Naive thymus-derived CD4-positive, alpha-beta T cell (primary cell): ENCODE measurements at regions of chr14 and their contacts with region 1.

Region 1: GRCh38 chr14:91060351-91061055 is at the start of gene RPS6KA5:
- DNase-seq: peak; percentile 93 to 100 (median 100)
- ATAC-seq: peak; percentile 89
- H3K4me3 ChIP-seq: peak within 1 kb of the TSS; percentile 59
- H3K4me3 Mint-ChIP-seq: peak within 1 kb of the TSS in 9 of 10 donors; percentile 80 to 90 (median 86)
- H3K27ac ChIP-seq: peak within 1 kb of the TSS; percentile 91
- H3K27ac Mint-ChIP-seq: peak within 1 kb of the TSS; percentile 28 to 83 (median 74)
- H3K4me1 ChIP-seq: peaks cover 36 to 38% of the 10 kb centered on the region in 2 donors
- H3K4me1 Mint-ChIP-seq: peaks cover 39 to 71% (median 64%) of the 10 kb centered on the region in 7 donors
- H3K27me3 ChIP-seq: no peaks in the 10 kb centered on the region
- H3K27me3 Mint-ChIP-seq: no peaks in the 10 kb centered on the region
- total RNA-seq, gene RPS6KA5: 31.9 to 43.5 (median 34.3) TPM

Region 2: DNA sequence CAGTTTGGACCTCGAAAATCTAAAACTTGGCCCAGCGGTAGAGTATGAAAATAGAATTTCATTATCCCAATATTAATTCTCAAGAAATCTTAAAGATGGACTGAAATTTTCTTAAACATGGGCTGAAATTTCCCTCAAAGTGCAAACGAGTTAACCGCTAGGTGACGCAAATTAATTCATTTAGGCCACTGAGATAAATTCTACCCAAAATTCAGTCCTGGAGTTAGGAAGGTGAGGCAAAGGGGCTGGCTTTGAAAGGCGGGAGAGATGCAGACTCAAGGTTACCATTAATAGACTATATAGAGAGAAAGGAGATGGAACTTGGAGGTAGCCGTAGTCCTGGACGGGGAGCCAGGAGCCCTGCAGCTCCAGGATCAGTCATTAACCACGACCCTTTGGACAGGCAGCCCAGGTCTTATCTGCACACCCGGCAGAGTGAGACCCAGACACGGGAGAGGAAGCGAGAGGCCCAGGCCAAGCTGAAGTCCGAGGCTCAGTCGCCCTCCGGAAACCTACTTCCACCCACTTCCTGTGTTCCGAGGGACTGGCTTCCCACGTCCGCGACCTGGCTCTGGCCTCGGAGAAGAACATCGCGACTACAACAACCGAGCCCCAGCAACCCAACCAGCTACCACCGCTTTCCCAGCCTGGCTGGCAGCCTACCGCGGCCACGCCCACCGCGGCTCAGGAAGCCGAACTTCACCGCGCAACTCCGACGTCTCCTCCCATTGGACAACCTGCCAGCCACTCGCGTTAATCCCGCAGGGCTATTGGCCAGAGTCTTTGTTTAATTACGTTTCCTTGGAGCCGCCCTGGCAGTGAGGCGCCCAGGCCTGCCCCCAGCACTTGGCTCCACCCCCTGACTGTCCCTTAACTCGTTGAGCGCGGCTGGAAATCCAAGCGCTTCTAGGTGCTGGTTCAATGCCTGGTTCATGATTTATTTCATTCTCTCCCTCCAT is 1106.2 kb before region 1 on chr14 and contains the start of gene EFCAB11:
- CTCF ChIA-PET with region 1: no interaction called
- POLR2A ChIA-PET with region 1: no interaction called
- intact Hi-C with region 1: loop called in 1 of 2 experiments (anchors 10 kb)
- DNase-seq: peak; percentile 80 to 98 (median 97)
- ATAC-seq: peak; percentile 90
- H3K4me3 ChIP-seq: peak within 1 kb of the TSS; percentile 72
- H3K4me3 Mint-ChIP-seq: peak within 1 kb of the TSS; percentile 74 to 98 (median 94)
- H3K27ac ChIP-seq: peak within 1 kb of the TSS; percentile 94
- H3K27ac Mint-ChIP-seq: peak within 1 kb of the TSS; percentile 82 to 98 (median 91)
- H3K4me1 ChIP-seq: peaks cover 16 to 21% of the 10 kb centered on the region in 2 donors
- H3K4me1 Mint-ChIP-seq: peaks cover 21 to 54% (median 43%) of the 10 kb centered on the region in 7 donors
- H3K27me3 ChIP-seq: no peaks in the 10 kb centered on the region
- H3K27me3 Mint-ChIP-seq: no peaks in the 10 kb centered on the region
- total RNA-seq, gene EFCAB11: 1.2 to 8.5 (median 1.9) TPM

Region 3: DNA sequence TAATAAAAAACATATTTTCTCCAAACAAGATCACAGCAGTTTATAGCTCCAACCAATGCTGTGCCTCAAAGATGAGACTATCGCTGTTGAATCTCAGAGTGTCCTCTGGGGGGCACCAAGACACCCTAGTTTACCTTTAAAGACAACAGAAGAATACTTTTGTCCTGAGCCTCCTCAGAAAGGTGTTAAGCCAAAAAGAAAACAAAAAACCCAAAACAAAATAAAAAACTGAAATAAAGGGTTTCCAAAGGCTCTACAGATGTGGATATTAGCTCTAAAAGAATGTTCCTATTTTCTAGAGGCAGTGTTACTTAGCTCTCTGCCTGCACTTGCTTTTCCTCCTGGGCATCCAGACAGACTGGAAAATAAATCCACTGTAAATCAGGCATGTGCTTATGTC is 157.4 kb before region 1 on chr14:
- CTCF ChIA-PET with region 1: no interaction called
- POLR2A ChIA-PET with region 1: interaction called, 3 read pairs
- intact Hi-C with region 1: loop called (anchors 1 to 2 kb)
- DNase-seq: peak; percentile 11 to 71 (median 57)
- ATAC-seq: peak; percentile 89
- H3K4me3 ChIP-seq: no peak overlapping the region
- H3K4me3 Mint-ChIP-seq: no peak overlapping the region
- H3K27ac ChIP-seq: no peak overlapping the region
- H3K27ac Mint-ChIP-seq: peak overlapping the region in 2 of 9 donors; percentile 36 to 48
- H3K4me1 ChIP-seq: no peaks in the 10 kb centered on the region
- H3K4me1 Mint-ChIP-seq: peaks cover 0 to 30% (median 0%) of the 10 kb centered on the region in 7 donors
- H3K27me3 ChIP-seq: no peaks in the 10 kb centered on the region
- H3K27me3 Mint-ChIP-seq: no peaks in the 10 kb centered on the region

Region 4: GRCh38 chr14:91078095-91078737 is 17.7 kb after region 1 on chr14:
- CTCF ChIA-PET with region 1: interaction called, 4 read pairs
- POLR2A ChIA-PET with region 1: interaction called, 25 read pairs
- intact Hi-C with region 1: loop called (anchors 1 kb)
- DNase-seq: peak in 8 of 9 donors; percentile 52 to 88 (median 82)
- ATAC-seq: peak; percentile 98
- H3K4me3 ChIP-seq: no peak overlapping the region
- H3K4me3 Mint-ChIP-seq: peak overlapping the region; percentile 56 to 85 (median 72)
- H3K27ac ChIP-seq: no peak overlapping the region
- H3K27ac Mint-ChIP-seq: peak overlapping the region; percentile 32 to 92 (median 82)
- H3K4me1 ChIP-seq: peaks cover 10 to 17% of the 10 kb centered on the region in 2 donors
- H3K4me1 Mint-ChIP-seq: peaks cover 24 to 63% (median 37%) of the 10 kb centered on the region in 7 donors
- H3K27me3 ChIP-seq: no peaks in the 10 kb centered on the region
- H3K27me3 Mint-ChIP-seq: peaks cover 0 to 2% (median 0%) of the 10 kb centered on the region in 5 donors

Region 5: DNA sequence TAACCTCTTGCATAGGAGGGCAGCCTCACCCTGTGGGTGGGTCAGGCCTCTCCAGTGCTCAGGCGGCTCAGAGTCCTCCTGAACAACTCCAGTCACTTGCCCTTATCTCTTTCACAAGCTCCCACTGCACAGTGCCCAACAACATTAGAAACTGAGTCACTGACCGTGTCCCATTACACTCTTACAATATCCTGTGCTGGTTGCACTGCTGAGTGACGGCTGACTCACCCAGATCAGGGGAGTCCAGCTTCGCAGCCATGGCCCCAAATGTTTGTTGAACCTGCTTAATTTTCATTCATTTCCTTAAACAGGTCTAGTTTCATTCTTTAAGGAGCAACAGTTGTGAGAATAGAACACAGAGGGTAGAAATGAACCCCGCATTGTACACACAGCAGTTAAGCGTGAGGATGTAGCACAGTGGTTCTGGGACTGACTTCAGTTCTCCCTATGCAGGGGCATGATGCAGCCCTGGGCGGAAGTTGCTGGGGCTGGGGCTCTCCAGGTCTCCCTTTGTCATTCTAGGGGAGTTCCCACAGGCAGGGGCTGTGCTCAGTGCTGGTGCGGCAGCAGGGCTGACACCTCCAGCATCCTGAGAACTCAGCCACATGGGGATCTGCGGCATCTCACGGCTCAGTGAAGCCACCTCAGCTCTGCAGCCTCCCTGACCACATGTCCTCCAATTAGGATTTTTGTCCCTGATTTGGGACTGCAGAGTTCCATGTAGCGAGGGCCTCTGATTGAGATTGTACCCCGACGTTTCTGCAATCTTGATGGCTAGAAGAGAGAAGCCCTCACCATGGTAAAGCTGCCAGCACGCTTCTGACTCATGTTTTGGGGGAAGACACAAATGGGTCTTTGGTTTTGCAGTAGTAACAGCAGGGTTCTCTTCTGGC is 167.9 kb after region 1 on chr14:
- CTCF ChIA-PET with region 1: no interaction called
- POLR2A ChIA-PET with region 1: no interaction called
- intact Hi-C with region 1: loop called in 1 of 2 experiments (anchors 2 kb)
- DNase-seq: peak; percentile 42 to 86 (median 60)
- ATAC-seq: peak; percentile 89
- H3K4me3 ChIP-seq: peak overlapping the region; percentile 34
- H3K4me3 Mint-ChIP-seq: peak overlapping the region; percentile 48 to 87 (median 73)
- H3K27ac ChIP-seq: peak overlapping the region; percentile 57
- H3K27ac Mint-ChIP-seq: peak overlapping the region; percentile 9 to 98 (median 88)
- H3K4me1 ChIP-seq: peaks cover 89 to 92% of the 10 kb centered on the region in 2 donors
- H3K4me1 Mint-ChIP-seq: peaks cover 69 to 99% (median 93%) of the 10 kb centered on the region in 7 donors
- H3K27me3 ChIP-seq: no peaks in the 10 kb centered on the region
- H3K27me3 Mint-ChIP-seq: no peaks in the 10 kb centered on the region

Region 6: DNA sequence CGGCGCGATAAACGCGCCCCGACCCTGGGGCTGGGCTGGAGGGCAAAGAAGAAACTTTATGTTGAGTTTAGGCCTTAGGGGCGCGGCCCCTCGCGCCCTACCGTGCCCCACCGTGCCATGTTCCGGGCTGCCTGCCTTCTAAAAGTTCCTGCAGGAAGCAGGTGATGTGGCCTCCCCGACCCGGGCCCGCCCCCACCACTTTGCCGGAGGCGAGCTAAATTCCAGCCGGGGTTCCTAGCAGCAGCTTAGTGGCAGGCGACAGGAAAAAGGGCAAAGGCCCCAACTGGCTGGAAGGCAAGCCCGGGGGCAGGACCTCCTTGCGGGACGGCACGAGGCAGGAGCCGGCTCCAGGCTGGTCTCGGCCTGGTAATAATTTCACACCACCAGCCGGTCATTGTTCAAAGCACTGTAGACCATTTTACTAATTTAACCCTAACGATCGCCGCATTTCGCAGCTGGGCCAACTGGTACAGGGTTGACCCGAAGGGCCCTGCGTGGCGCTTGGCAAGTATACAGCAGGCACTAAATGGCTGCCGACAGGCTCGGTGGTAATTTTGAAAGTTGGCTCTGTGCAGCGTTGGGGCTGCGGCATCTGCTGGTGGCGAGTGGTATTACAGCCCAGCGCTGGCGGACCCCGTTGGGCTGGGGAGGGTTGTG is 358.0 kb after region 1 on chr14:
- CTCF ChIA-PET with region 1: interaction called, 4 read pairs
- POLR2A ChIA-PET with region 1: no interaction called
- intact Hi-C with region 1: loop called (anchors 1 to 2 kb)
- DNase-seq: peak; percentile 75 to 86 (median 82)
- ATAC-seq: peak; percentile 63
- H3K4me3 ChIP-seq: peak overlapping the region; percentile 52
- H3K4me3 Mint-ChIP-seq: peak overlapping the region; percentile 61 to 91 (median 84)
- H3K27ac ChIP-seq: peak overlapping the region; percentile 97
- H3K27ac Mint-ChIP-seq: peak overlapping the region; percentile 80 to 98 (median 91)
- H3K4me1 ChIP-seq: peaks cover 19 to 25% of the 10 kb centered on the region in 2 donors
- H3K4me1 Mint-ChIP-seq: peaks cover 22 to 42% (median 34%) of the 10 kb centered on the region in 7 donors
- H3K27me3 ChIP-seq: no peaks in the 10 kb centered on the region
- H3K27me3 Mint-ChIP-seq: peaks cover 0 to 7% (median 0%) of the 10 kb centered on the region in 5 donors